Heart right ventricle (tissue), 16 donors: ENCODE measurements at regions of chr17 and their contacts with region 1.

Region 1: GRCh38 chr17:40168262-40168832 is 8.9 kb upstream of the RAPGEFL1 start:
- DNase-seq: peak in 1 of 2 donors; percentile 32
- ATAC-seq: peak; percentile 29 to 67 (median 60)
- H3K4me3 ChIP-seq: no peak overlapping the region
- H3K27ac ChIP-seq: peak overlapping the region in 6 of 10 donors; percentile 27 to 67 (median 42)
- H3K4me1 ChIP-seq: peaks cover 0 to 12% (median 6%) of the 10 kb centered on the region in 9 donors
- H3K27me3 ChIP-seq: no peaks in the 10 kb centered on the region
- CTCF ChIP-seq: peak; percentile 68 to 89 (median 82)

Region 2: DNA sequence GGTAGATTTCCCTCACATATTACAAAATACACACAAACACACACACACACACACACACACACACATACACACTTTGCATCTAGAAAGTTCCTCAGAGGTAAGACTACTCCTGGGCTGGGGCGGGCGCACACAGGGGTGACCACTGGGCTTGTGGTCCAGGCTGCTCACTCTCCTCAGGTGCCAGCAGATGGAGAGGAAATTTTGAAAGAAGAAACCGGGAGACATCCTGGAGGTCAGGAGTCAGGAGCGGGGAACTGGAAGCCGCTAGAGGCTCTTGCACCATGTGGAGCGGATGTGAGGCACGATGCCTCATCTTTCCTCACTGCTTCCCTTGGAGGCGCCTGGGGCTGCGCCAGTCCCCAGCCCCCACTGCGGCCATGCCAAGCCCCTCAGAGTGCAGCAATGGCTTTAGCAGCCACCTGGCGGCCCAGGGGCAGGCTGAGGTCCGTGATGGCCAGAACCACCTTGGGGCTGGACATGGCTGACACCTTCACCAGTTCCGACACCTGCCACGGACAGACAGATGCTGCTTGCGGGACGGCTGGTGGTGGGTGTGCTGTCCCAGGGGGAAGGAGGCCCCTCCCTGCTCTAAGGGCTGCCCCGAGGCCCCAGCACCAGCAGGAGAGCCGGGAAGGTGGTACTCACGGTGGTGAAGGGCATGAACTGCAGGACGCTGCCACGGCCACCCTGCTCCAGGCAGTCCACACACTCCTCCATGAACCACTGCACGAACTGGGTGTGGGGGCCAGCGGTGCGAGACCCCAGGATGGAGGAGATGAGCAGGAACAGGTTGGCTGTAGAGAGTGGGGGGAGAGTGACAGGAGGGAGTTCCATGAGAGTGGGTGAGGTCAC is 149.0 kb before region 1 on chr17:
- intact Hi-C with region 1: loop called in 8 of 10 experiments (anchors 5 to 10 kb)
- DNase-seq: peak in 1 of 2 donors; percentile 30
- ATAC-seq: peak in 2 of 8 donors; percentile 5 to 51
- H3K4me3 ChIP-seq: no peak overlapping the region
- H3K27ac ChIP-seq: peak overlapping the region in 5 of 10 donors; percentile 8 to 63 (median 60)
- H3K4me1 ChIP-seq: peaks cover 9 to 76% (median 53%) of the 10 kb centered on the region in 9 donors
- H3K27me3 ChIP-seq: no peaks in the 10 kb centered on the region
- CTCF ChIP-seq: no peak

Region 3: GRCh38 chr17:40026816-40027613 is 141.3 kb before region 1 on chr17:
- intact Hi-C with region 1: loop called in 4 of 10 experiments (anchors 10 kb)
- DNase-seq: peak; percentile 78 to 87
- ATAC-seq: peak; percentile 87 to 94 (median 91)
- H3K4me3 ChIP-seq: no peak overlapping the region
- H3K27ac ChIP-seq: peak overlapping the region in 2 of 10 donors; percentile 18 to 31
- H3K4me1 ChIP-seq: peaks cover 8 to 38% (median 16%) of the 10 kb centered on the region in 9 donors
- H3K27me3 ChIP-seq: no peaks in the 10 kb centered on the region
- CTCF ChIP-seq: peak; percentile 91 to 97 (median 95)

Region 4: DNA sequence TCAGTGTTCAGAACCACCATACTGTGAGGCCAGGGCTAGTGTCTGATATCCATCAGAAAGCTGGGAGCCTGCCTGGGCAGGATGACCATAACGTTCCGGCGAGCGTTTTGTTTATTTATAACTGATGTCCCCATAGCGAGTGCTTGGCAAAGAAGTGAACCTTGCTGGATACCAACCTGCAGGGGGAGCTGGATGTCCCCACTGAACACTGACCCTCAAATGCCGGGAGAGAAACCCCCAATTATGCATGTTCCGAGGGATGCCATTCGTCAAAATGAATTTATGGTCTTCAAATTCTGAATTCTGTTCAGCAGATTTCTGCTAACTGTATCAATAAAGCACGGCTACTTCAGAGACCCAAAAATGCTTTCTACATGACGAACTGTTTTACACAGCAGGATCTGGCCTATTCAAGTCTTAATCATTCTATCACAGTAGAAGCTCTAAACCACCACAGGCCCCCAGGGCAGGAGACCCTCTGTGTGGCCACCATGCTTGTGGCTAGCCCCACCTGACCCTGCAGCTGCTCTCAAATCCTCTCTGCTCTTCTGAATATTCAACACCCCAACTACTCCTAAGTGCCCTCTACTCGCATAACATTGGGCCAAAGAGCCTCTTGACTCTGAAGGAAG is 129.3 kb before region 1 on chr17:
- intact Hi-C with region 1: loop called in 3 of 10 experiments (anchors 5 to 10 kb)
- DNase-seq: peak; percentile 54 to 87
- ATAC-seq: peak; percentile 88 to 98 (median 94)
- H3K4me3 ChIP-seq: peak overlapping the region in 1 of 10 donors; percentile 12
- H3K27ac ChIP-seq: peak overlapping the region; percentile 51 to 86 (median 78)
- H3K4me1 ChIP-seq: peaks cover 0 to 30% (median 17%) of the 10 kb centered on the region in 9 donors
- H3K27me3 ChIP-seq: no peaks in the 10 kb centered on the region
- CTCF ChIP-seq: peak; percentile 65 to 85 (median 73)

Region 5: GRCh38 chr17:40121181-40122135 is 46.9 kb before region 1 on chr17 and contains the start of gene MSL1:
- intact Hi-C with region 1: loop called in 2 of 10 experiments (anchors 2 to 10 kb)
- DNase-seq: peak; percentile 90 to 92
- ATAC-seq: peak; percentile 89 to 93 (median 90)
- H3K4me3 ChIP-seq: peak within 1 kb of the TSS; percentile 89 to 100 (median 100)
- H3K27ac ChIP-seq: peak within 1 kb of the TSS; percentile 92 to 99 (median 97)
- H3K4me1 ChIP-seq: peaks cover 5 to 39% (median 31%) of the 10 kb centered on the region in 9 donors
- H3K27me3 ChIP-seq: no peaks in the 10 kb centered on the region
- CTCF ChIP-seq: no peak
- total RNA-seq, gene MSL1: 26.3 to 57.4 (median 37.7) TPM

Region 6: DNA sequence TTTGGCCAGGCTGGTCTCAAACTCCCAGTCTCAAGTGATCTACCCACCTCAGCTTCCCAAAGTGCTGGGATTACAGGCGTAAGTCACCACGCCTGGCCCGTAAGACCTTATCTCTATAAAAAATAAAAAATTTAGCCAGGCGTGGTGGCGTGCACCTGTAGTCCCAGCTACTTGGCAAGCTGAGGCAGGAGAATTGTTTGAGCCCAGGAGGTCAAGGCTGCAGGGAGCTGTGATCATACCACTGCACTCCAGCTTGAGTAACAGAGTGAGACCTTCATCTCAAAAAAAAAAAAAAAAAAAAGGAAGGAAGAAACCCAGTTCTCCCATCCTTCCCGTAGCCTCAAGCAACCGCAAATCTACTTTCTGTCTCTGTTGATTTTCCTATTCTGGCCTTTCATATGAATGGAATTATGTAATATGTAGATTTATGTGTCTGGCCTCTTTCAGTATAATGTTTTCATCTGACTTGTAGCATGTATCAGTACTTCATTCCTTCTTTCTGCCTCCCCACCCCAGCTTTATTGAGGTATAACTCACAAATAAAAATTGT is 16.9 kb before region 1 on chr17:
- intact Hi-C with region 1: loop called in 1 of 10 experiments (anchors 2 kb)
- DNase-seq: no peak
- ATAC-seq: no peak
- H3K4me3 ChIP-seq: no peak overlapping the region
- H3K27ac ChIP-seq: peak overlapping the region in 1 of 10 donors; percentile 0
- H3K4me1 ChIP-seq: peaks cover 0 to 52% (median 13%) of the 10 kb centered on the region in 9 donors
- H3K27me3 ChIP-seq: no peaks in the 10 kb centered on the region
- CTCF ChIP-seq: no peak